ENCODE measurements at regions of chr17 and their contacts with region 1.

Region 1: GRCh38 chr17:1365445-1366039 is 34.5 kb downstream of the YWHAE start:
- DNase-seq: peak; percentile 67
- H3K4me3 ChIP-seq: no peak overlapping the region
- H3K27ac ChIP-seq: no peak overlapping the region
- H3K4me1 ChIP-seq: peaks cover 21% of the 10 kb centered on the region
- H3K27me3 ChIP-seq: no peaks in the 10 kb centered on the region
- CTCF ChIP-seq: peak; percentile 88 to 93

Region 2: GRCh38 chr17:951325-952132 is 414.0 kb before region 1 on chr17:
- CTCF ChIA-PET with region 1: no interaction called
- dilution Hi-C with region 1: no loop called
- in situ Hi-C with region 1: no loop called
- intact Hi-C with region 1: no loop called
- DNase-seq: peak; percentile 65
- H3K4me3 ChIP-seq: no peak overlapping the region
- H3K27ac ChIP-seq: peak overlapping the region; percentile 54
- H3K4me1 ChIP-seq: peaks cover 29% of the 10 kb centered on the region
- H3K27me3 ChIP-seq: no peaks in the 10 kb centered on the region
- CTCF ChIP-seq: no peak

Region 3: DNA sequence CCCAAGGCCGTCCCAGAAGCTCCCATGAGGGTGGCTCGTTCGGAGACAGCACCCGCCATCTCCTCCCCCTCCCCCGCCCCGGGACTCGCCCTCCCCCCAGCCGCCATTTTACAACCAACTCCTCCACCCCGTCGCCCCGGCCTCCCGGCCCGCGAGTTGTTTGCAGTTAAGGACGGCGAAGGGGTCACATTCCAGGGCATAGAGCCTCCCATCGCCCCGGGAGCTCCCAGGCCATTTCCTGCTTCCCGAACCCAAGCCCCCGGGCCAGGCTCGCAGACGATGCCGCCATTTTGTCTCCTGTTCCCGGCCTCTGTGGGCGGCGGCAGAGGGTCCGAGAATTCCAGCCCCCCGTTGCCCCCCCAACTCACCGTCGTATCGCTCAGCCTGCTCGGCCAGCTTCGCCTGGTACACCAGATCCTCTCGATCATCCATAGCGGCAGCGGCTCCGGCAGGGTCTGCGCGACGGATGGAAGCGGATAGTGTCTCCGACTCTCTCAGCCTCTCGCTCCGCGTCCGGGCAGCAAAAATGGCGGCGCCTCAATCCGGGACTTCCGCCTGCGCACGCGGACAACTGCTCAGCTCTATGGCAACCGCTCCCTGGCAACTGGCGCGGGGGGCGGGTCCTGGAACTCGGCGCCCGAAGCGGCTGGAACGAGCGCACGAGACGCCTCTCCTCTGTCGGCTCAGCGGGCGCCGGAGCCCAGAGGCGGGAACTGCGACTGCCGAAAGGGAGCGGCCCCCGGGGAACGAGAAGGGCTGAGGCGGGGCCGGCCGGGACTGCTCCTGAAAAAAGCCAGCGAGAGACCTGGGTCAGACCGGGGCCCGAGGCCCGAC is 34.4 kb after region 1 on chr17 and contains the start of gene YWHAE:
- CTCF ChIA-PET with region 1: interaction called, 3 read pairs
- dilution Hi-C with region 1: no loop called
- in situ Hi-C with region 1: no loop called
- intact Hi-C with region 1: loop called (anchors 2 kb)
- DNase-seq: peak; percentile 96
- H3K4me3 ChIP-seq: peak within 1 kb of the TSS; percentile 75 to 97 (median 90)
- H3K27ac ChIP-seq: peak within 1 kb of the TSS; percentile 96
- H3K4me1 ChIP-seq: peaks cover 9% of the 10 kb centered on the region
- H3K27me3 ChIP-seq: no peaks in the 10 kb centered on the region
- CTCF ChIP-seq: no peak
- total RNA-seq, gene YWHAE: 528 to 689 TPM

Region 4: DNA sequence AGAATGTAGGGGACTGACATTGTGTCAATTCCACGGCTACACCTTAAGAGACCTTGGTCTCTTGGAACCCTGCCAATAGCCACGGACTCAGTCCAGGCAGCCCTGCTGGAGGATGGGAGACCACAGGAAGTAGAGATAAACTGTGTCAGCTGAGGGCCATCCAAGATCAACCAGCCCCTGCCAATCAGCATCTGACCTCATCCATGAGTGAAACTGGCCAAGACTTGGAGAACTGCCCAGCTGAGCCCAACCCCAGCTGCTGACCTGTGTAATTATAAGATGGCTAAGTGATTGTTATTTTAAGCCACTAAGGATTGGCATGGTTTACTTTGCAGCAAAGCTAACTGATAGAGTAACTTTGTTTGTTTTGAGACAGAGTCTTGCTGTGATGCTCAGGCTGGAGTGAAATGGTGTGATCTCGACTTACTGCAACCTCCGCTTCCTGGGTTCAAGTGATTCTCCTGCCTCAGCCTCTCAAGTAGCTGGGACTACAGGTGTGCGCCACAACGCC is 47.8 kb after region 1 on chr17:
- CTCF ChIA-PET with region 1: interaction called, 18 read pairs
- dilution Hi-C with region 1: no loop called
- in situ Hi-C with region 1: no loop called
- intact Hi-C with region 1: no loop called
- DNase-seq: peak; percentile 77
- H3K4me3 ChIP-seq: no peak overlapping the region
- H3K27ac ChIP-seq: no peak overlapping the region
- H3K4me1 ChIP-seq: peaks cover 7% of the 10 kb centered on the region
- H3K27me3 ChIP-seq: no peaks in the 10 kb centered on the region
- CTCF ChIP-seq: no peak

Region 5: DNA sequence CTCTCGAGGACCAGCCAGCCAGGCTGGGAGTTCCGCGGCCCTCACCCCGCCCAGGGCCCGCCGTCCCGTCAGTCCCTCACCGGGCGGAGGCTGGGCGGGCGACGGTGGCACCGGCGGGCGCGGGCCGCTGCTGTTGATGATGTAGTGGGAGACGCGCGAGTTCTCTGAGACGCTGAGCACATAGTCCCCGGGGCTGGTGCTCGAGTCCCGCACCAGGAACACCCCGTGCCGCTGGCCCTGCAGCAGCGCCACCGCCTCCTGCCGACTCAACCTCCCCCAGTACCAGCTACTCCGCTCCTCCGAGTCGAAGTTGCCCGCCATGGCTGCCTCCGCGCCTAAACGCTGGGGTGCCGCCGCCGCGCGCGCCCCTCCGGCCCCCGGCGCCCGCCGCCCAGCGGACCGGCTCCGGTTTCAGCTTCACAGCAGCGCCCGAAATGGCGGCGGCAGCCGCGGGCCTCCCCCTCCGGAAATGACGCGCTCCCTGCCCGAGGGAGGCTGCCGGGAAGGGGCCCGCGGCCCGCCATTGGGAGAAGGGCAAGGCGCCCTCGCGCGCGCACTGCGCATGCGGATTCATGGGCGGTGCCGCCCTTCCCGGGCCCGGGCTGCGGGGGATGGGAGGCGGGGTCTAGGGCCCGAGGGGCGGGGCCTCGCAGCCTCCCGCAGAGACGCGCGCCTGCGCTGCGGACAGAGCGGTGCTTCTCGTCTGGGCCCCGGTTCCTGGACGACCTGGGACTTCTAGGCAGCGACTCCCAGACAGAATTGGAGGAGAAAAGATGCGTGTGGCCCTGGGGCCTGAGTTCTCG is 90.5 kb after region 1 on chr17 and contains the start of gene CRK:
- CTCF ChIA-PET with region 1: no interaction called
- dilution Hi-C with region 1: no loop called
- in situ Hi-C with region 1: no loop called
- intact Hi-C with region 1: loop called (anchors 1 kb)
- DNase-seq: peak; percentile 94
- H3K4me3 ChIP-seq: peak within 1 kb of the TSS; percentile 76 to 97 (median 91)
- H3K27ac ChIP-seq: peak within 1 kb of the TSS; percentile 81
- H3K4me1 ChIP-seq: peaks cover 13% of the 10 kb centered on the region
- H3K27me3 ChIP-seq: no peaks in the 10 kb centered on the region
- CTCF ChIP-seq: no peak
- total RNA-seq, gene CRK: 71.4 to 127 TPM

Region 6: GRCh38 chr17:1490643-1491442 is 125.3 kb after region 1 on chr17:
- CTCF ChIA-PET with region 1: interaction called, 4 read pairs
- dilution Hi-C with region 1: no loop called
- in situ Hi-C with region 1: no loop called
- intact Hi-C with region 1: loop called (anchors 2 kb)
- DNase-seq: peak; percentile 42
- H3K4me3 ChIP-seq: peak overlapping the region; percentile 64 to 83 (median 71)
- H3K27ac ChIP-seq: peak overlapping the region; percentile 27
- H3K4me1 ChIP-seq: peaks cover 42% of the 10 kb centered on the region
- H3K27me3 ChIP-seq: no peaks in the 10 kb centered on the region
- CTCF ChIP-seq: no peak